ENCODE measurements at regions of chr7 and their contacts with region 1.

Region 1: GRCh38 chr7:2863461-2864066 is 19.5 kb upstream of the GNA12 start:
- DNase-seq: peak; percentile 21 to 89 (median 66)
- ATAC-seq: peak; percentile 74
- H3K4me3 ChIP-seq: peak overlapping the region in 1 of 2 experiments; percentile 32
- H3K4me3 Mint-ChIP-seq: peak overlapping the region; percentile 64
- H3K27ac ChIP-seq: peak overlapping the region in 1 of 2 experiments; percentile 70
- H3K27ac Mint-ChIP-seq: peak overlapping the region; percentile 96
- H3K4me1 ChIP-seq: peaks cover 26% of the 10 kb centered on the region
- H3K4me1 Mint-ChIP-seq: peaks cover 27% of the 10 kb centered on the region
- H3K27me3 ChIP-seq: peaks cover 0 to 3% of the 10 kb centered on the region in 2 experiments
- H3K27me3 Mint-ChIP-seq: no peaks in the 10 kb centered on the region
- CTCF ChIP-seq: no peak

Region 2: DNA sequence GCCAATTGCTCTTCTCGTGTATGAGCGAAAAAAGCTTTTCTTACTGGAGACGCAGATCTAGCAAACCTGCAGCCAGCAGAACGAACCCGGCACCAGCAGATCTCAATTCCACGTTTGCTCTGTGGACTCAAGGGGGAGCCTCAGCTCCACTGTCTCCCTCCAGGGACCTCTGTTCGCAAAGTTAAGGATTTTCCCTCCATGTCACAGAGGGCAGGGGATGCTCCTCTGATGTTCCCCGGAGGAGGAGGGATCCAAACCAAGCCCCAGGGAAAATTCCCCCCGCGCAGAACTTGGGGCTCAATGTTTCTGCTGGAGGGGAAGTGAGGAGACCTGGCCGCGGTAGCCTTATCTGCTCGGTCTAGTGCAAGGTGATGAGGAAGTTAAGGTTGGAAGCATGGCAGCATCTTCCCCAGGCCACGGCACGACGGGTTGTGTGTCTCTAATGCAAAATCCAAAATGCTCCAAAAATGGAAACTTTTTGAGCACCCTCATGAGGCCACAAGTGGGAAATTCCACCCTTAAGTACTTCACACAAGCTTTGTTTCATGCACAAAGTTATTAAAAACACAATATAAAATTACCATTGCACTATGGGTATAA is 295.8 kb before region 1 on chr7:
- CTCF ChIA-PET with region 1: no interaction called
- POLR2A ChIA-PET with region 1: no interaction called
- intact Hi-C with region 1: no loop called
- DNase-seq: peak in 1 of 9 experiments; percentile 44
- ATAC-seq: no peak
- H3K4me3 ChIP-seq: no peak overlapping the region
- H3K4me3 Mint-ChIP-seq: no peak overlapping the region
- H3K27ac ChIP-seq: no peak overlapping the region
- H3K27ac Mint-ChIP-seq: no peak overlapping the region
- H3K4me1 ChIP-seq: no peaks in the 10 kb centered on the region
- H3K4me1 Mint-ChIP-seq: peaks cover 2% of the 10 kb centered on the region
- H3K27me3 ChIP-seq: no peaks in the 10 kb centered on the region
- H3K27me3 Mint-ChIP-seq: no peaks in the 10 kb centered on the region
- CTCF ChIP-seq: no peak

Region 3: DNA sequence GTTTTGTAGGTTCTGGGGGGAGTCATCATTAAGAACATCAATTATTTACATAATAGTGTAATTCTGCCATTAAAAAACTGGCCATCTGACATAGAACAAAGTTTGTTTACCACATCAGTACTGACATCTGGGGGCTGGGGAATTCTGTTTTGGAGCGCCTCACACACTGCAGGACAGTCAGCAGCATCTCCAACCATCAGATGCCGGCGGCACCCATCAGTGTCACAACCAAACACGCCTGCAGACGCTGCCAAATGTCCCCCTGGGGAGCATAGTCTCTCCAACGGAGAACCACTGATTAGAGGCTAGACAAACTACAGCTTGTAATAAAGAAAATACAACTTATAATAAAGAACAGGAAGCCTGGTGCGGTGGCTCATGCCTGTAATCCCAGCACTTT is 45.4 kb before region 1 on chr7:
- CTCF ChIA-PET with region 1: no interaction called
- POLR2A ChIA-PET with region 1: no interaction called
- intact Hi-C with region 1: no loop called
- DNase-seq: no peak
- ATAC-seq: no peak
- H3K4me3 ChIP-seq: no peak overlapping the region
- H3K4me3 Mint-ChIP-seq: no peak overlapping the region
- H3K27ac ChIP-seq: no peak overlapping the region
- H3K27ac Mint-ChIP-seq: no peak overlapping the region
- H3K4me1 ChIP-seq: no peaks in the 10 kb centered on the region
- H3K4me1 Mint-ChIP-seq: peaks cover 13% of the 10 kb centered on the region
- H3K27me3 ChIP-seq: no peaks in the 10 kb centered on the region
- H3K27me3 Mint-ChIP-seq: no peaks in the 10 kb centered on the region
- CTCF ChIP-seq: no peak

Region 4: GRCh38 chr7:2886900-2887299 is 23.3 kb after region 1 on chr7:
- CTCF ChIA-PET with region 1: interaction called, 11 read pairs
- POLR2A ChIA-PET with region 1: no interaction called
- intact Hi-C with region 1: no loop called
- DNase-seq: peak in 7 of 9 experiments; percentile 14 to 83 (median 64)
- ATAC-seq: peak; percentile 77
- H3K4me3 ChIP-seq: no peak overlapping the region
- H3K4me3 Mint-ChIP-seq: no peak overlapping the region
- H3K27ac ChIP-seq: no peak overlapping the region
- H3K27ac Mint-ChIP-seq: no peak overlapping the region
- H3K4me1 ChIP-seq: no peaks in the 10 kb centered on the region
- H3K4me1 Mint-ChIP-seq: peaks cover 4% of the 10 kb centered on the region
- H3K27me3 ChIP-seq: no peaks in the 10 kb centered on the region
- H3K27me3 Mint-ChIP-seq: no peaks in the 10 kb centered on the region
- CTCF ChIP-seq: peak; percentile 69

Region 5: DNA sequence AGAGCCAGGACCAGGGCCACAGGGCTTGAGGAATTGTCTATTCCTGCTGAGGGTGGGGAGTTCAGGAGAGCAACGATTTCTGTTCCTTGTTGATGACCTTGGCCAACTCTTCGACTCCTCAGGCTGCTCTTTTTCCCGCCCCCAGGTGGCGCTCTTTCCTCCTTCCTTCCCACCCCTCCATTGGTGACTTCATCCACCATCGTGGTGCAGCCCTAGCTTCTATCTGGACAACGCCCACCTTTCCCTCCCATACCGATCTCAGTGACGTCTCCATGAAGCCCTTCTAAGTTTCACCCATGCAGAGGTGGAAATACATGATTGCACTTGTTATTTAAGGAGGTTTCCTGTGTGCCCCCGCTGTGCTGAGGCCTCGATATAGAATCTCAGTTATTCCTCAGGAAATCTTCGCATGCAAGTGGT is 202.2 kb after region 1 on chr7:
- CTCF ChIA-PET with region 1: interaction called, 5 read pairs
- POLR2A ChIA-PET with region 1: no interaction called
- intact Hi-C with region 1: loop called in 1 of 2 experiments (anchors 5 kb)
- DNase-seq: peak; percentile 28 to 84 (median 65)
- ATAC-seq: peak; percentile 45
- H3K4me3 ChIP-seq: no peak overlapping the region
- H3K4me3 Mint-ChIP-seq: peak overlapping the region; percentile 55
- H3K27ac ChIP-seq: peak overlapping the region in 1 of 2 experiments; percentile 83
- H3K27ac Mint-ChIP-seq: peak overlapping the region; percentile 85
- H3K4me1 ChIP-seq: peaks cover 86% of the 10 kb centered on the region
- H3K4me1 Mint-ChIP-seq: peaks cover 80% of the 10 kb centered on the region
- H3K27me3 ChIP-seq: no peaks in the 10 kb centered on the region
- H3K27me3 Mint-ChIP-seq: no peaks in the 10 kb centered on the region
- CTCF ChIP-seq: peak; percentile 61

Region 6: DNA sequence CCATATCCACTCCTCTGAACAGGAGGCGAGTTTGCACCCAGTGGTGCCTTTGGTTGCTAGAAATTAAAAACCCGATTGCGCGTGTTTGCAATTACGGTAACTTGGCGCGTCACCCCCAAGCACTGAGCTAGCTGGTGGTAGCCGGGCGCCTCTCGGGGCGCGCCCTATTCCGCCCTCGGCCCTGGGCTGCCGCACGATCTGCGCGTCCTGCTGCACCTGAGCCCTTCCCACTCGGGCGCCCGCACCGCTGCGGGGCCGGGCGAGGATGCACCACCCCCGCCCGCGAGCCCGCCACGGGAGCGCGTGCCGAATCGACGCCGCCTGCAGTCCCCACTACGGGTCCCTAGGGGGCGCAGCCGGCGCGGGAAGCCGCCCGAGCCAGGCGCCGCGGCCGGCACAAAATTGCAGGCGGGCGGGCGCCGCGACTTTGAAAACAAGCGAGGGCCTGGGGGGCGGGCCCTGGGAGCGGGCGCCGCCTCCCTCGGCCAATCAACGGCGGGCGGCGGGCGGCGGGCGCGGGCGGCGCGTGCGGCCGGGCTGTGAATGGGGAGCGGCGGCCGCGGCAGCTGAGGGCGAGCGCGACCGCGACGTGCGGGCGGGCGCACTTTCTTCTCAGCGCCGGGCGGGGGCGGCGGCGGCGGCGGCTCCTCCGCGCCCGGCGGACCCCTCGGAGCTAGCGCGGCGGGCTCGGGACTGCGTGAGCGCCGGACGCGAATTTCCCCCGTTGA is 437.3 kb after region 1 on chr7 and contains the start of gene SDK1:
- CTCF ChIA-PET with region 1: no interaction called
- POLR2A ChIA-PET with region 1: no interaction called
- intact Hi-C with region 1: loop called (anchors 2 to 5 kb)
- DNase-seq: peak; percentile 80 to 96 (median 90)
- ATAC-seq: peak; percentile 82
- H3K4me3 ChIP-seq: peak within 1 kb of the TSS; percentile 33 to 54
- H3K4me3 Mint-ChIP-seq: peak within 1 kb of the TSS; percentile 86
- H3K27ac ChIP-seq: no peak within 1 kb of the TSS
- H3K27ac Mint-ChIP-seq: no peak within 1 kb of the TSS
- H3K4me1 ChIP-seq: peaks cover 17% of the 10 kb centered on the region
- H3K4me1 Mint-ChIP-seq: peaks cover 15% of the 10 kb centered on the region
- H3K27me3 ChIP-seq: peaks cover 3 to 4% of the 10 kb centered on the region in 2 experiments
- H3K27me3 Mint-ChIP-seq: peaks cover 16% of the 10 kb centered on the region
- CTCF ChIP-seq: peak; percentile 79
- total RNA-seq, gene SDK1: 0.24 to 0.36 TPM

Region 7: DNA sequence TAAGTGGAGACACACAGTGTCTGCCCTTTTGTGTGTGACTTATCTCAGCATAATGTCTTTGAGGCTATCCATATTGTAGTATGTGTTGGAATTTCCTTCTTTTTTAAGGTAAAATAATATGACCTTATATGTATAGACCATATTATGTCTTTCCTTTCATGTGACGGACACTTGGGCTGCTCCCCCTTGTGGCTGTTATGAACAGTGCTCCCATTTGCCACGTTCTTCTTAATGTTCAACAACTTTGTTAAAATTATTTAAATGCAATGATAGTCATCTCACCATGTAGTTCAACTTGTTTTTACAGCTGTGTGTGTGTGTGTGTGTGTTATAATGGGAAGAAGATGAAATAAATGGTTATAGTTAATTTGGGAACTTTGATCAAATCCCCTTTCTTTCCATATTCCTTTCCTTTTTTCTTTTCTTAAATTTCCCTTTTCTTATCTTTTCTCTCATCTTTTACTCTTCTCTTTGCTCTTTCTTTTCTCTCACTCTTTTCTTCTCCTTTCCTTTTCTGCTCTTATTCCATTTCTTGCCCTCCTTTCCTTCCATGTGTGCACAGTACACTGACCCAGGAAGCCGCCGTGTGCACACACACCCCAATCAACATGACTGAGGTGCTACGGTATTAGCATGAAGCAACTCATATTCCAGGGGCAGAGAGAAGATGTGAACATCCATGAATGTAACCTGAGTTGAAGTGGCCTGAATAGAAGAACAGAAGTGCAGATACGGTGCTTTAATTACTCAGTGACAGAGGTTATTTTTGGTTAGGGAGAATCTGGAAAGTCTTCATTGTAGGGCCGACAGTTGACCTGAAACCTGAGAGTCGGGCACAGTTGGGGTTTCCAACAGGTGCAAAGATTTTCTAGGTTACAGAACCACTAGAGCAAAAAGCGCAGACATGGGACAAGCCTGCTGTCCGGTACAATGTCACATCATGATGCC is 1034.1 kb after region 1 on chr7:
- CTCF ChIA-PET with region 1: interaction called, 13 read pairs
- POLR2A ChIA-PET with region 1: no interaction called
- intact Hi-C with region 1: loop called in 1 of 2 experiments (anchors 1 kb)
- DNase-seq: peak in 7 of 9 experiments; percentile 17 to 71 (median 51)
- ATAC-seq: peak; percentile 54
- H3K4me3 ChIP-seq: no peak overlapping the region
- H3K4me3 Mint-ChIP-seq: no peak overlapping the region
- H3K27ac ChIP-seq: no peak overlapping the region
- H3K27ac Mint-ChIP-seq: no peak overlapping the region
- H3K4me1 ChIP-seq: no peaks in the 10 kb centered on the region
- H3K4me1 Mint-ChIP-seq: no peaks in the 10 kb centered on the region
- H3K27me3 ChIP-seq: peaks cover 0 to 4% of the 10 kb centered on the region in 2 experiments
- H3K27me3 Mint-ChIP-seq: peaks cover 2% of the 10 kb centered on the region
- CTCF ChIP-seq: peak; percentile 92